ENCODE measurements at regions of chr18 and their contacts with region 1.

Region 1: DNA sequence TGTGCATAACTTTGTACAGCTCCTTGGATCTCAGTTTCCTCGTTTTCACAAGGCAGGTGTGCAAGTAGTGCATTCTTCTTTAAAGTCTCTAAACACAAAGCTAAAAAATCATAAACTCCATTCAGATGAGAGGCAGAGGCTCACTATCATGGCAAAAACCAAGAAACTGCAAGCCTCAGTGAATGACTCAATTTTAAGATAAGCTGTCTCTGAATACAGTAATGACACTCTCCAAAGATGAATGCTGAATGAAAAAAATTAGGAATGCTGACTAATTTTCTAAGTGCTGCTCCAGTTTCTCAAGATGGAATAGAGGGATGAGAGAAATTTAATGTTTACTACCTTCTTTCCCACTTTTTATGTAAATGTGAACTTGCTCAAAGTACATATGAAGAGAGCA is 17.2 kb downstream of the B4GALT6 start:
- DNase-seq: no peak
- CTCF ChIP-seq: no peak

Region 2: GRCh38 chr18:31648966-31649429 is 18.2 kb before region 1 on chr18:
- CTCF ChIA-PET with region 1: interaction called, 10 read pairs
- POLR2A ChIA-PET with region 1: interaction called, 3 read pairs
- DNase-seq: peak; percentile 59
- CTCF ChIP-seq: no peak

Region 3: DNA sequence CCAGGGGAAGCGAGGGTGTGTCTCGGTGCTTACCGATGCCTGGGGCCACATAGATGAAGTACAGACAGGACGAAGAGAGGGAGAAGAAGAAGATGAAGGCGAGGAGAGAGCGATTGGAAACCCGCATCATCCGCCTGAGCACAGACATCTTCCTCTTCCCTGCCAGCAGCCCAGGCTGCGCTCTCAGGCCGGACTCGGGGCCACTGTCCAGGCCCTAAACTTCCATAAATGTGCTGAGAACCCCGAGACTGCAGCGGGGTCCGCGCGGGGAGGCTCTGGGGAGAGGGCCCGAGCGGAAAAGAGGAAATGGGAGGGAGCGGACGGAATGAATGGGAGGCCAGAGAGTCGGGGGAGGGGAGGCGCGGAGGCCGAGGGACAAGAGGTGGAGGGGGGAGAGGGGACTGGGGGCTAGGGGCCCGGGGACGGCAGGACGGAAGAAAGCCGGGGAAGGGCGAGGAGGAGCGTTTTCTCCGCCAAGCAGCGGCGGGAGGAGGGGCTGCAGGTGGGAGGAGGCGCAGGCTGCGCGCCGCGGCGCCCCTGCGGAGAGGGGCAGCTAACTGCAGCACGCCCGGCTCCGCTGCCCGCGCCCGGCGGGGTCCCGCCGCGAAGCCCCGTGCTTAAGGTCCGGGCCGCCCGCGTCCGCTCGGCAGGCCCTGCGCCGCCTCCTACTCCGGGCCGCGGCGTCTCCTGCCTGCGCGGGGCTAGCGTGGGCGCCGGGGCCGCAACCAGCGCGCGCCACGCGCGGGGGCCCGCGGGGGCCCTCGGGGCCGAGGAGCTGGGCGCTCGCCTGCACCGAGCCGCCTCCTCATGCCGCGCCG is 17.3 kb after region 1 on chr18 and contains the start of gene B4GALT6:
- CTCF ChIA-PET with region 1: interaction called, 60 read pairs
- POLR2A ChIA-PET with region 1: no interaction called
- DNase-seq: peak; percentile 73
- CTCF ChIP-seq: peak; percentile 4

Region 4: GRCh38 chr18:32072321-32072720 is 405.1 kb after region 1 on chr18:
- CTCF ChIA-PET with region 1: no interaction called
- POLR2A ChIA-PET with region 1: no interaction called
- DNase-seq: peak; percentile 24
- CTCF ChIP-seq: peak; percentile 31